ENCODE measurements at regions of chr17 and their contacts with region 1.

Region 1: GRCh38 chr17:28871056-28871579 is 16.3 kb downstream of the ERAL1 start:
- DNase-seq: peak; percentile 58
- ATAC-seq: peak; percentile 100
- H3K4me3 Mint-ChIP-seq: peak overlapping the region; percentile 80
- H3K27ac Mint-ChIP-seq: peak overlapping the region; percentile 100
- H3K4me1 Mint-ChIP-seq: peaks cover 10% of the 10 kb centered on the region
- H3K27me3 Mint-ChIP-seq: no peaks in the 10 kb centered on the region

Region 2: DNA sequence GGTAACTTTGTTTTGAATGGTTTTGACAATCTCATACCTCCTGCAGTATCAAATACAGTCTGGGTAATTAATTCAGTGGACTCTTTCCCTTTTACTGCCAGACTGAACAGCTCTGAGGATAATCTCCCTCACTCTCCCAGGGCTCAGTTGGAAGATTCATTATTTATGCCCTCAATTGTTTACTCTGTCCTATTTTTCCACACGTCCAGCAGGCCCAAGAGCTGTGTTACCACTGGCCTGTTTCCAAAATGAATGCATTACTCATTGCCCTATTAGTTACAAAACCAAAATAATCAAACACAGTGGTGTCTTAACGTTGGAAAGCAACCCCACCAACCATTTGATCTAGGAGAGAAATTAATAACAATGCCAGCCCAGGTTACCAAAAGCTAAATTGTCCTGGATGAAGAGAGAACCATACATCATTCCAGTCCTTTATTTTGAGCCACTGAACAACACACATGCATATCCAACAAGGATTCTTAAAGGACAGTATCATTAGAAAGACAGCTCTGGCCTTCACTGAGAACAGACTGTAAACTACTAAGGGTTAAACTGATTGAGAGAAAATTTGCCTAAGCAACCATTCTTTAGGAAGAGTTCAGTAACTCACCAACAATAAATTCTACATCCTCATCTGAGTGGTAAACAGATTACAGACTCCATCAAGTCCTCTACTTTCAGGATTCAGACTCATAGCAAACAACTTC is 63.0 kb before region 1 on chr17:
- POLR2A ChIA-PET with region 1: no interaction called
- DNase-seq: no peak
- ATAC-seq: no peak
- H3K4me3 Mint-ChIP-seq: no peak overlapping the region
- H3K27ac Mint-ChIP-seq: no peak overlapping the region
- H3K4me1 Mint-ChIP-seq: peaks cover 18% of the 10 kb centered on the region
- H3K27me3 Mint-ChIP-seq: no peaks in the 10 kb centered on the region

Region 3: GRCh38 chr17:28842282-28843012 is 28.7 kb before region 1 on chr17 and contains the start of gene FAM222B:
- POLR2A ChIA-PET with region 1: interaction called, 13 read pairs
- DNase-seq: peak; percentile 91
- ATAC-seq: peak; percentile 99
- H3K4me3 Mint-ChIP-seq: peak within 1 kb of the TSS; percentile 100
- H3K27ac Mint-ChIP-seq: peak within 1 kb of the TSS; percentile 97
- H3K4me1 Mint-ChIP-seq: peaks cover 21% of the 10 kb centered on the region
- H3K27me3 Mint-ChIP-seq: no peaks in the 10 kb centered on the region
- total RNA-seq, gene FAM222B: 17.0 to 21.2 TPM

Region 4: GRCh38 chr17:28892024-28892423 is 20.9 kb after region 1 on chr17:
- POLR2A ChIA-PET with region 1: interaction called, 28 read pairs
- DNase-seq: no peak
- ATAC-seq: no peak
- H3K4me3 Mint-ChIP-seq: peak overlapping the region; percentile 15
- H3K27ac Mint-ChIP-seq: peak overlapping the region; percentile 72
- H3K4me1 Mint-ChIP-seq: peaks cover 52% of the 10 kb centered on the region
- H3K27me3 Mint-ChIP-seq: no peaks in the 10 kb centered on the region

Region 5: GRCh38 chr17:28896884-28897768 is 26.0 kb after region 1 on chr17 and contains the start of gene FLOT2:
- POLR2A ChIA-PET with region 1: interaction called, 28 read pairs
- DNase-seq: peak; percentile 80
- ATAC-seq: peak; percentile 62
- H3K4me3 Mint-ChIP-seq: peak within 1 kb of the TSS; percentile 98
- H3K27ac Mint-ChIP-seq: peak within 1 kb of the TSS; percentile 97
- H3K4me1 Mint-ChIP-seq: peaks cover 56% of the 10 kb centered on the region
- H3K27me3 Mint-ChIP-seq: no peaks in the 10 kb centered on the region
- total RNA-seq, gene FLOT2: 195 to 216 TPM

Region 6: DNA sequence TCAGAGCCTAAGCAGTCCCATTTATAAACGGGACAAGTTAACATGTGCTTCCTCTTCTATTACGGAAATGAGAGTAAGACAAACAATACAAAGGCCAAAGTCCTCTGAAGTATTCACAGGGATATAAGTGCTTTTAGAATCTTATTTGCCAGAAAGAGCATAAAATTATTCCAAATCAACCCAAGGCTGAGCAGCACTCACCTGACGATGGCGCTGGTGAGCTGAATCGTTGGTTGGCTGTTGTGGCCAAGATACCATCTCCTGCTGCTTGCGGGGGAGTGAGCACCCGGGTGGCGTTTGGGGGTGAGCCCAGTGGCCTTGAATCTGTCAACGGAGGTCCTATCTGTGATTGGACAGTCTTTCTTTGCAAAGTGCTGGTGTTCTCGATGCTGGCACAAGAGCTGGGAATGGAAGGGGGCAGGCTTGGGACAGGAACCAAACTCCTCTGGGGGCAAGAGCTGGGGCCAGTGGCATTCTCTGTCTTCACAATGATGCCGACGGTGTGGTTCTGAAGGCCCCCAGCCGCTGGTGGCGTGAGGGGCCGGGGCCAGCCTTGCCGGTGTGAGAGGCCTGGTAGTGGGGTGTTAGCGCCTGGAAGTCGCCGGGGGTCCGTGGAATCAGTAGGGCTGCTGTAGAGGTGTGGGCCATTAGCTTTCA is 41.3 kb after region 1 on chr17:
- POLR2A ChIA-PET with region 1: no interaction called
- DNase-seq: no peak
- ATAC-seq: no peak
- H3K4me3 Mint-ChIP-seq: no peak overlapping the region
- H3K27ac Mint-ChIP-seq: no peak overlapping the region
- H3K4me1 Mint-ChIP-seq: no peaks in the 10 kb centered on the region
- H3K27me3 Mint-ChIP-seq: no peaks in the 10 kb centered on the region